ENCODE measurements at regions of chr5 and their contacts with region 1.

Region 1: GRCh38 chr5:139651853-139652787 is 4.0 kb downstream of the CXXC5 start:
- DNase-seq: peak; percentile 90

Region 2: GRCh38 chr5:139363937-139364336 is 288.2 kb before region 1 on chr5:
- intact Hi-C with region 1: no loop called
- DNase-seq: no peak

Region 3: GRCh38 chr5:139430015-139430414 is 222.1 kb before region 1 on chr5:
- intact Hi-C with region 1: no loop called
- DNase-seq: no peak

Region 4: DNA sequence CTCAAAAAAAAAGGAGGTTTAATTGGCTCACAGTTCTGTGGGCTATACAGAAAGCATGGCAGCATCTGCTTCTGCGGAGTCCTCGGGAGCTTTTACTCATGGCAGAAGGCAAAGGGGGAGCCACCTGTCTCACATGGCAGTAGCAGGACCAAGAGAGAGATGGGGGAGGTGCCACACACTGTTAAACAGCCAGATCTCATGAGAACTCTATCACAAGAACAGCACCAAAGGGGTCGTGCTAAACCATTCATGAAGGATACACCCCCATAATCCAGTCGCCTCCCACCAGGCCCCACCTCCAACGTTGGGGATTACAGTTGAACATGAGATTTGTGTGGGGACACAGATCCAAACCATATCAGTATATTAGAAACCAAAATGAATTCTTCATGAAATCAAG is 32.3 kb before region 1 on chr5:
- intact Hi-C with region 1: no loop called
- DNase-seq: no peak

Region 5: GRCh38 chr5:139633295-139634027 is 18.7 kb before region 1 on chr5:
- intact Hi-C with region 1: loop called in 1 of 2 experiments (anchors 2 kb)
- DNase-seq: peak; percentile 86

Region 6: GRCh38 chr5:139690064-139690802 is 38.1 kb after region 1 on chr5:
- intact Hi-C with region 1: loop called in 1 of 2 experiments (anchors 5 kb)
- DNase-seq: peak; percentile 88

Region 7: GRCh38 chr5:139733698-139734538 is 81.8 kb after region 1 on chr5:
- intact Hi-C with region 1: no loop called
- DNase-seq: no peak

Region 8: DNA sequence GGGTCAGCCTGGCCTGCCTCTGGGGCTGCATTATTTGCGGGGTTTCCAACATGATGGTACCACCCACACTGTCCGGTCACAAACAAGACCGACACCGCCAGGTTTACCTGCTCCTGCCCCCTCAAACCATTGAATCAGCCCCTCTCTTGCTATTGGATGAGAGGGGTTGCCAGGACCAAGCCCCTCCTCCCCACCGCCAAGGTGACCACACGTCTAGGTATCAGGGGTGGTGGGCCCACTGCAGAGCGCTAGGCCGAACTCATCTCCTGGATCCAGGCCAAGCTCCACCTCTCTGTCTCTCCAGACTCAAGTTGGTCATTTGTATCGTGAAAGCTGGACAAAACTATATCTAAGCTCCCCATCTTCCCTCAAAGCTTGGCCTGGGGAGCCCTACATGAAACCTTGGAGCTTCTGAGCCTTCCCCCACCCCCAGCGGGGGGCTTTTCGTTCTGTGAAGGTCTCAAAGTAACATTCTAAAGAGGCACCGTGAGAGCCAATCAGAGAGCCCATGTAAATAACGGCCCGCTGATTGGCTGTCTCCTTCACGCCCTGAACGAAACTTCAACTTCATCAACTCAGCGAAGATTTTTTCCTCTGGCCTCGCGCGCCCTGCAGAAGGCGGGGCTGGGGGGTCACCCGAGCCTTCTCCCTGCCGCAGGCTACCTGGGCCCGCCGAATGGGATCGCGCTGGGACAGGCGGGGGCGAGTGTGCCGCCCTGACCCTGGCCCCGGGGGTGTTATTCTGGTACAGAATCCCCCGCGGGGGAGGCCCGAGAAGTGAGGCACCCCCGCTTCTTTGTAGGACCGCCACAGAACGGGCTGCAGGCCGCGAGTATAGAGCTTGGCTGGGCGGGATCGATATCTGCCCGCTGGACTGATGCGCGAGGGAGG is 93.9 kb after region 1 on chr5:
- intact Hi-C with region 1: loop called in 1 of 2 experiments (anchors 5 kb)
- DNase-seq: peak; percentile 87